ENCODE measurements at regions of chr21 and their contacts with region 1.

Region 1: DNA sequence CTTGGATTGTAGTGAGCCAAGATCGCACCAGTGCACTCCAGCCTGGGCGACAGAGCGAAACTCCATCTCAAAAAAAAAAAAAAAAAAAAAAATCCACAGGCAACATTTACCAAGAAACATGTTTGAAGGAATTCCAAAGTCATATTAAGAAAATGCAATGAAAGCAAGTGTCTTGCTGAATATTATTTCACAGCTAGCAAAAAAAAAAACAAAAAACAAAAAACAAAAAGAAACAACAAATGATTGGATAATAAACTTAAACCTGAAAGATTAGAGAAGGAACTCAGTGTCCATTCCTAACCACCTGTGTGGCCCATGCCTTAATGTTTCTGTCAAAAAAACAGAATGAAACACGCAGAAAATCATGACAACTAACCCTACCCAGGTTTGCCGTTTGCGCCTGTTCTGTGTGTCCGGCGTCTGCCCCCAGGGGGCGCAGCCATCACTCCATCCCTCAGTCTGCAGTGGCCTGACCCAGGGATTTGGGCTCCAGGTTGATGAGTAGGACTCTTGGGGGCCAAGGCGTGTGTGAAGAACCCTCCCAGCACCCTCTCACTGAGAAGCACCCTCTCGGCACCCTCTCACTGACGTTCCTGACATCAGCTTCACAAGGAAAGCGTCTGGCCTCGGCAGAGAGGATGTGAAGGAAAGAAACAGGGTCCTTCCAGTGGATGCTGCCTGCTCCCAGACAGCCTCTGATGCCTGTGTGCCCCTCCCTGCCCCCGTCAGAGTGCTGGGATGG is 19.2 kb upstream of the PTTG1IP start:
- DNase-seq: peak; percentile 50 to 82 (median 61)
- H3K4me3 ChIP-seq: no peak overlapping the region
- H3K27ac ChIP-seq: no peak overlapping the region
- H3K4me1 ChIP-seq: no peaks in the 10 kb centered on the region
- H3K27me3 ChIP-seq: no peaks in the 10 kb centered on the region
- CTCF ChIP-seq: peak; percentile 66 to 87 (median 84)
- POLR2A ChIP-seq: no peak

Region 2: GRCh38 chr21:44932408-44933181 is 39.9 kb after region 1 on chr21:
- intact Hi-C with region 1: loop called (anchors 2 to 5 kb)
- DNase-seq: peak in 1 of 7 donors; percentile 31
- H3K4me3 ChIP-seq: peak overlapping the region in 2 of 4 donors; percentile 19 to 48
- H3K27ac ChIP-seq: no peak overlapping the region
- H3K4me1 ChIP-seq: peaks cover 17 to 28% of the 10 kb centered on the region in 2 donors
- H3K27me3 ChIP-seq: peaks cover 13% of the 10 kb centered on the region
- CTCF ChIP-seq: peak in 5 of 6 experiments; percentile 7 to 52 (median 26)
- POLR2A ChIP-seq: no peak

Region 3: GRCh38 chr21:45130324-45130774 is 237.6 kb after region 1 on chr21:
- intact Hi-C with region 1: loop called in 1 of 2 experiments (anchors 5 kb)
- DNase-seq: peak in 6 of 7 donors; percentile 49 to 81 (median 71)
- H3K4me3 ChIP-seq: peak overlapping the region in 2 of 4 donors; percentile 14 to 42
- H3K27ac ChIP-seq: peak overlapping the region; percentile 42 to 90 (median 81)
- H3K4me1 ChIP-seq: peaks cover 23 to 56% of the 10 kb centered on the region in 2 donors
- H3K27me3 ChIP-seq: no peaks in the 10 kb centered on the region
- CTCF ChIP-seq: no peak
- POLR2A ChIP-seq: peak in 1 of 2 donors; percentile 73

Measured in adrenal gland (tissue), 19 donors.